GM18951 (cell line): ENCODE measurements at regions of chr12 and their contacts with region 1.

Region 1: GRCh38 chr12:29552324-29552927 is 54.9 kb upstream of the OVCH1 start:
- POLR2A ChIP-seq: no peak

Region 2: DNA sequence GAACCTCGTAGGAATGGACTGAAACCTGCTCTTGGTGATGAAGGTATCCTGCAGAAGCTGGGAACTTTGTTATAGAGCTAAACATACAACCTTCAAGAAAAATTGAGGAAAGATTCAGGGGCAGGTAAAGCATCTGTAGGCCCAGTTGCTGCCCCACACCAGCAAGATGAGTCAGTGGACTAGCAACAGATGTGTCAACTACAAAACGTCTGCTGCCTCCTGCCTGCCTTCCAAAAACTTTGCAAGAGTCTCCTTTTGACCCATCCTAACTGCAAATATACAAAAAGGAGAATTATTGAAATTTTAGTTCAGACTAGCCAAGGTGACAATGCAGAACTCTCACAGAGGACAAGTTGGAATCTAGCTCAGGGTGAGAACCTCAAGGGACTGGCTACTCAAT is 292.2 kb after region 1 on chr12:
- in situ Hi-C with region 1: no loop called
- POLR2A ChIP-seq: no peak

Region 3: GRCh38 chr12:30806989-30807694 is 1254.7 kb after region 1 on chr12:
- in situ Hi-C with region 1: loop called (anchors 25 kb)
- POLR2A ChIP-seq: no peak